ENCODE measurements at regions of chr17 and their contacts with region 1.

Region 1: GRCh38 chr17:45345554-45346215 is 28.9 kb upstream of the MAP3K14 start:
- DNase-seq: no peak
- CTCF ChIP-seq: no peak

Region 2: DNA sequence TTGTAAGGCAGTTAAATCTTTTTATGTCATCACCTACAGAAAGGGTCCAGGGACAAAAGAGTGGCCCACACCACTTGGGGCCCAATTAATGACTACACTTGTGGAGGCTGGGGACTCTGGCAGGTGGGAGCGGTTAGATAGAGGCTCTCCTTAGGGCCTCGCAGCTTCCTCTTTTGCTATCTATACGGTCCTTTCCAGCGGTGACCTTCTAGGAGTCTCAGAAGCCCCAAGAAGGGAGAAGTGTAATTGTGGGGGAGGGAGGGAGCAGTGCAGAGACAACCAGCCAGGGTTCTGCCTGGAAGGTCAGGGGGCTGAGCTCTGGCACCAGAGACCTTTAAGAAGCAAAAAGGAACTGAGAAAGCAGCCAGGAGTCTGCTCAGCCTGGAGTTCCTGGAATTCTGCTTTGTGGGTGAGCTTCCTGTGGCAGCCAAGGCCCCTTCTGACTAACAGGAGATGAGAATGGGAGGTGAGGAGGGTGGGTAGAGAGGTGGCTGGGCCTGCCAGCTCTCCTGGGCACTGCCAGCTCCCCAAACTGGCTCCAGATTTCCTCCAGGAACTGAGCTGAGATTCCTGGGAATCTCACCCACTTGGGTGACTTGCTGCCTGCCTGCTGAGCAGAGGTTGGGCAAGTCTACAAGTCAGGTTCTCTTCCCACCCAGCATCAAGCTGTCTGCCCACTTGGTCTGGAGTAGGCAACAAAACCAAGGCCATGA is 12.5 kb before region 1 on chr17:
- CTCF ChIA-PET with region 1: interaction called, 10 read pairs
- POLR2A ChIA-PET with region 1: interaction called, 5 read pairs
- DNase-seq: peak; percentile 72
- CTCF ChIP-seq: no peak

Region 3: DNA sequence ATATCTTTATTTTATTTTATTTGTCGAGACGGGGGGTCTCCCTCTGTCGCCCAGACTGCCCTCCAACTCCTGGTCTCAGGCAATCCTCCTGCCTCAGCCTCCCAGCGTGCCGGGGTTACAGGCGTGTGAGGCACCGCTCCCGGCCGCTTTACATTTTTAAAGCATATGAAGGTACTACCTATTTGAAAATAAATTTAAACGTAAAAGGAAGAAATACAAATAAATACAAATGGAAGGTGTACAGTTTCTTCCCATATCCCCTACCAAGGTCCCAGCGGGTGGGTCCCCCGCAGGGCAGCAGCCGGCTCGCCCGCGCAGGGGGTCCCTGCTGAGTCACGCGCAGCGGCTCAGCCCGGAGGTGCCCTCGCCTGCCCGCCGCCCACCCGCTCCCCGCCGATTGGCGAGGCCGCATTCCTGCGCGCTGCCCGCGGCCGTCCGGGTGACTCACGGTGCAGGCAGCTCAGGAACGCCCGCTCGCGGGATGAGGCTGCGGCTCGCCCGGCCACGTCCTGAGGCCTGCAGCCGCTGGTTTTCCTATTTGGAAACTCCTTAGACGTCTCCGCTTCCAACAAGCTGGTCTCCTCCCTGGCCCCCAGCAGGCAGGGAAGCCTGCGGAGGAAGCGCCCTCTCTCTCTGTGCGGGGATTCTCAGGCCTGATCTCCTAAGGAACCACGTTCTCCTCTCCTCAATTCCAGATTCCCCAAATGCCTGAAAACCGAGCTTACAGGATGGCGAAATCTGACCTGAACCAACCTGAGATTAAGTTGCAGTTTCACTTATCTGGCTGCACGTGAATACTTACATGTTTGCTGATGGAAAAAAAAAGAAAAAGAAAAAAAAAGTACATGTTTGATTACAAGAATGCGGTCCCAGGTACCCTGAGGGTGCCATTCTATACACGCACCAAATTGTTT is 26.0 kb after region 1 on chr17:
- CTCF ChIA-PET with region 1: no interaction called
- POLR2A ChIA-PET with region 1: no interaction called
- DNase-seq: no peak
- CTCF ChIP-seq: no peak